ENCODE measurements at regions of chr16 and their contacts with region 1.

Region 1: DNA sequence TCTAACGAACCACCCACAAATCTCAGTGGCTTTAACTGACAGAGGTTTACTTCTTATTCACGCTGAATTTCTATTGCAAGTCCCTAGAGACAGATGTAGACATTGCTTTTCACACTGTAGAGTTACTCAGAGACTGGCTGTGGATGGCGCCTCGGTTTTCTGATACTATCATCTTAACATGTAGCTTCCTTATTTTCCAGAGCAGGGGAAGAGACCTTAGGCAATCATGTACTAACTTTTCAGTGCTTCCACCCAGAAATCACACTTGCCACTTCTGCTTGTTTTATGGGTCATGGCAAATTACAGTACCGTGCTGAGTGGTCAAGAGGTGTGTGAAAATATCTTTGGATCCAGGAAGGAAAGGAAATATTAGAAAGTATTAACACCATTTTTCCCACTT is 65.4 kb downstream of the MAF start:
- DNase-seq: no peak
- ATAC-seq: no peak
- H3K4me3 ChIP-seq: no peak overlapping the region
- H3K27ac ChIP-seq: peak overlapping the region; percentile 89
- H3K4me1 ChIP-seq: peaks cover 36% of the 10 kb centered on the region
- H3K27me3 ChIP-seq: no peaks in the 10 kb centered on the region
- CTCF ChIP-seq: no peak

Region 2: GRCh38 chr16:79362300-79362970 is 172.7 kb before region 1 on chr16:
- intact Hi-C with region 1: loop called in 1 of 2 experiments (anchors 5 kb)
- DNase-seq: no peak
- ATAC-seq: peak; percentile 75 to 88 (median 78)
- H3K4me3 ChIP-seq: peak overlapping the region; percentile 33
- H3K27ac ChIP-seq: peak overlapping the region; percentile 82
- H3K4me1 ChIP-seq: peaks cover 5% of the 10 kb centered on the region
- H3K27me3 ChIP-seq: no peaks in the 10 kb centered on the region
- CTCF ChIP-seq: no peak

Measured in psoas muscle (tissue), 8 donors.